ENCODE measurements at regions of chr15 and their contacts with region 1.

Region 1: DNA sequence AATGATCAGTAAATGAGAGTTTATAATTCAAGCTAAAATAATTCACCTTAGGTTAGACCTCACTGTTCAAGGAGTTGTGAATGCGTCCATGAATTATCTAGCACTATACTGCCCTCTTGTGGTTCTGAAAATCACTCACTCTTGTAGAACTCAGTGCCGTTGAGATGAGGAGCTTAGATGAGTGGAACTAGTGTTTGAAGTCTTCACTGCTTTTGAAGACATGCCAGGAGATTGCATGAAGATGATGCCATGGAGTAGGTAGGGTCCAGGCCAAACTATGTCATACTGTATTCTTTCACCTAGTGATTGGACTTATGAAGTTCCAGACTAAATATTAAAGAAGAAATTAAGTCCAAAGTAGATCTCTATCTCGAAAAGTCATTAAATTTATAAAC is 28.8 kb downstream of the LYSMD4 start:
- DNase-seq: no peak
- H3K4me3 Mint-ChIP-seq: no peak overlapping the region
- H3K27ac Mint-ChIP-seq: no peak overlapping the region
- H3K4me1 Mint-ChIP-seq: peaks cover 44% of the 10 kb centered on the region
- H3K27me3 Mint-ChIP-seq: no peaks in the 10 kb centered on the region

Region 2: GRCh38 chr15:99273801-99274200 is 430.6 kb before region 1 on chr15:
- intact Hi-C with region 1: loop called (anchors 1 kb)
- DNase-seq: no peak
- H3K4me3 Mint-ChIP-seq: no peak overlapping the region
- H3K27ac Mint-ChIP-seq: no peak overlapping the region
- H3K4me1 Mint-ChIP-seq: peaks cover 14% of the 10 kb centered on the region
- H3K27me3 Mint-ChIP-seq: no peaks in the 10 kb centered on the region

Region 3: GRCh38 chr15:99343881-99344551 is 360.4 kb before region 1 on chr15:
- intact Hi-C with region 1: loop called (anchors 10 kb)
- DNase-seq: no peak
- H3K4me3 Mint-ChIP-seq: no peak overlapping the region
- H3K27ac Mint-ChIP-seq: peak overlapping the region; percentile 11
- H3K4me1 Mint-ChIP-seq: peaks cover 12% of the 10 kb centered on the region
- H3K27me3 Mint-ChIP-seq: no peaks in the 10 kb centered on the region

Region 4: GRCh38 chr15:99424978-99425656 is 279.3 kb before region 1 on chr15:
- intact Hi-C with region 1: loop called (anchors 5 kb)
- DNase-seq: peak; percentile 39
- H3K4me3 Mint-ChIP-seq: peak overlapping the region; percentile 9
- H3K27ac Mint-ChIP-seq: peak overlapping the region; percentile 80
- H3K4me1 Mint-ChIP-seq: peaks cover 38% of the 10 kb centered on the region
- H3K27me3 Mint-ChIP-seq: no peaks in the 10 kb centered on the region

Region 5: DNA sequence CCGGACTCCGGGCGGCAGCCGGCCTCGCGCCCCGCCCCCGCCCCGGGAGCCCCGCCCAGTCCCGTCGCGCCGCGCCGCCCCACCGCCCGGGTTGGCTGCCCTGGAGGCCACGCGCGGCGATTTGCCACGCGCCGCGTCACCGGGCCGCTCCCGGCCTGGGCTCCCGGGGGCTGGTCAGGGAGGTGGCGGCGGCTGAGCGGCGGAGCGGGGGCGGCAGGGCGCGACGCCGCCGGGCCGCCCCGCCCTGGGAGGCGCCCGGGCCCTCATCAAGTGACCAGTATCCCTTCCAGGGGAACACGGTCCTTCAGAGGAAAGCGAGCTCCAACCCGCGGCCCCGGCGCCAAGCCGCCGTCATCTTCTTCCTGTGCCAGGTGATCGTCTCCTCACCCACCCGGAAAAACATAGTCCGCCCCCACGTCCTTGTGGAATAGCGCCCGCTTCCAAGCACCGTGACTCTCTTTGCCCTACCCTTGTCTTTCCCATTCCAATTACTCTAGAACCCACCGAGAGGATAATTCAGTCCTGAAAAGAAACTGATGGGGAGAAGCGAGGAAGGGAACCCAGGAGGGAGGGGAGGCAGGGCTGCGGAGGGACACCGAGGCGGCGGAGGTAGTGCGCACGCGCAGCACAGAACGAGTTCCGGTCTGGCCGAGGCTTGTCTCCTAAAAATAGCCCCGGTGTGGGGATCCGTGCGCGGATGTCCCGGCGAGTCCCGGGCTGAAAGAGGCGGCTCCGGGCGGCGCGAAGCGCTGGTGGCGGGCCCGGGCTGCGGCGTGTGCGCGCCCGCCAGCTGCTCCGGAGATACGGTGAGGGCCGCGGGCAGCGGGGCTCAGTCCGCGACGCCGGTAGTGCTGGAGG is 138.9 kb before region 1 on chr15 and contains the start of gene MEF2A:
- intact Hi-C with region 1: loop called (anchors 2 kb)
- DNase-seq: peak; percentile 92
- H3K4me3 Mint-ChIP-seq: peak within 1 kb of the TSS; percentile 98
- H3K27ac Mint-ChIP-seq: peak within 1 kb of the TSS; percentile 93
- H3K4me1 Mint-ChIP-seq: peaks cover 31% of the 10 kb centered on the region
- H3K27me3 Mint-ChIP-seq: peaks cover 8% of the 10 kb centered on the region
- total RNA-seq, gene MEF2A: 20.9 and 23.4 TPM in 2 replicates

Region 6: DNA sequence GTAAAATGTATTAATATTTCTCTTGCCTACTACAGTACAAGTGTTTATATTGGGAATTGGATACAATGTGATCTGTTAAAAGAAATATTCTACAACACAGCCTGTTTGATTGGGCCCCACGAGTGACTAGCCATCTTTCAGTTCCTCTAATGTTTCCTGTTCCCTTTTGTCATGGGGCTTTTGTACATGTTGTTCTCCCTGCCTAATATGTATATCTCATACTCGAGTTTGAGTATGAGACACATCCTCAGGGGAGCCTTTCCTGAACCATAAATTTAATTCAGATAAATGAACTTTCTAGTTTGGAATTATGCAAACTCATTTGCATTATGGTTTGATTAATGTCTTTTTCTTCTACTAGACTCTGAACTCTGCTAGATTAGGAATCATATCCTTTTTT is 73.2 kb before region 1 on chr15:
- intact Hi-C with region 1: no loop called
- DNase-seq: no peak
- H3K4me3 Mint-ChIP-seq: no peak overlapping the region
- H3K27ac Mint-ChIP-seq: no peak overlapping the region
- H3K4me1 Mint-ChIP-seq: peaks cover 20% of the 10 kb centered on the region
- H3K27me3 Mint-ChIP-seq: no peaks in the 10 kb centered on the region

Region 7: GRCh38 chr15:99744142-99744541 is 39.7 kb after region 1 on chr15:
- intact Hi-C with region 1: no loop called
- DNase-seq: no peak
- H3K4me3 Mint-ChIP-seq: no peak overlapping the region
- H3K27ac Mint-ChIP-seq: no peak overlapping the region
- H3K4me1 Mint-ChIP-seq: peaks cover 4% of the 10 kb centered on the region
- H3K27me3 Mint-ChIP-seq: peaks cover 6% of the 10 kb centered on the region

Region 8: DNA sequence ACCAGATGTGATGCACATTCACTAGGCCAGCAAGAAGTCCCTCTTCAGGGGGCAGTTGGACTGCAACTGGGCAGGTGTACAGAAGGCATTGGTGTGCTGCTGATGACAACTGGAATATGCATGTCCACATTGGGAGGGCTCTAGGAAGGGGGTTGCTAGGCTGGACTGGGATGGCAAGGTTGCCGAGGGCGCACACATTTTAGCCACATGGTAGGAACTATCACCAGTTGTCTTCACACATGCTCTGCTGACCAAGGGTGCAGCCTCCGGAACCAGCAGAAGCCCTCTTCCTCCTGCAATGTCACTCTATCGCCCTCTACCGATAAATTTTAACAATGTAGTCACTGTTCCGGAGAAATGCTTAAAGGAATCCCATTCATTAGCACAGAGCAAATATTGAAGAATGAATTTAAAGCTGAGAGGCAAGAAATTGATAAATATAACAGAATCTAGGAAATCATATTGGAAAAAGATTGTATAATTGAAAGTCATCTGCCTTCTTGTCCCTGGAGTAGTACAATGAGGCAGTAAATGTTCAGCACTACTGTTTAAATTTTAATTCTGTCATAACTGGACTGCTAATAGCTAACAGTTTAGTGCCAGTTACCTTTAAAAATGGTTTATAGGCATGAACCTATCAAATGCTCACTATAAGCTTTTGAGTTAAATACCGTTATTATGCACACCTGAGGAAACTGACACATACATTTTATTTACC is 51.4 kb after region 1 on chr15:
- intact Hi-C with region 1: loop called (anchors 2 kb)
- DNase-seq: peak; percentile 22
- H3K4me3 Mint-ChIP-seq: no peak overlapping the region
- H3K27ac Mint-ChIP-seq: no peak overlapping the region
- H3K4me1 Mint-ChIP-seq: no peaks in the 10 kb centered on the region
- H3K27me3 Mint-ChIP-seq: peaks cover 7% of the 10 kb centered on the region

Region 9: DNA sequence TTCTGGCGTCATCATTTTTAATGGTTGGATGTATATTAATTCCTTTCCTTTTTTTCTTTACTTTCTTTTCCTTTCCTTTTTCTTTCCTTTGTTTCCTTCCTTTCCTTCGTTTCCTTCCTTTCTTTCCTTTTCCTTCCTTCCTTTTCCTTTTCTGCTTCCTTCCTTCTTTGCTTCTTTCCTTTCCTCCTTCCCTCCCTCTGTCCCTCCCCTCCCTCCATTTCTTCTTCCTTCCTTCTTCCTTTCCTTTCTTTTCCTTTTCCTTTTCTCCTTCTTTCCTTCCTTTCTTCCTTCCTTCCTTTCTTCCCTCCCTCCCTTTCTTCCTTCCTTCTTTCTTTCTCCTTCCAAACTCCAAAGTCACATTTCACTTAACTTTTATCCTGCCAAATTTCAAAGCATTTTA is 83.7 kb after region 1 on chr15:
- intact Hi-C with region 1: no loop called
- DNase-seq: no peak
- H3K4me3 Mint-ChIP-seq: no peak overlapping the region
- H3K27ac Mint-ChIP-seq: no peak overlapping the region
- H3K4me1 Mint-ChIP-seq: no peaks in the 10 kb centered on the region
- H3K27me3 Mint-ChIP-seq: peaks cover 20% of the 10 kb centered on the region